ENCODE measurements at regions of chr17 and their contacts with region 1.

Region 1: GRCh38 chr17:64420143-64420971 is 28.6 kb upstream of the MILR1 start:
- DNase-seq: peak; percentile 81
- ATAC-seq: peak; percentile 86
- H3K4me3 ChIP-seq: no peak overlapping the region
- H3K27ac ChIP-seq: no peak overlapping the region
- H3K4me1 ChIP-seq: peaks cover 3 to 18% of the 10 kb centered on the region in 2 experiments; a peak in 2 of 4 replicates
- H3K27me3 ChIP-seq: no peaks in the 10 kb centered on the region
- CTCF ChIP-seq: peak; percentile 85 to 95 (median 92)
- POLR2A ChIP-seq: no peak
- RAD21 ChIP-seq: peak; percentile 99

Region 2: GRCh38 chr17:63919311-63919723 is 501.0 kb before region 1 on chr17:
- CTCF ChIA-PET with region 1: interaction called, 10 read pairs
- POLR2A ChIA-PET with region 1: no interaction called
- RAD21 ChIA-PET with region 1: no interaction called
- intact Hi-C with region 1: no loop called
- DNase-seq: peak; percentile 59
- ATAC-seq: peak; percentile 98
- H3K4me3 ChIP-seq: no peak overlapping the region
- H3K27ac ChIP-seq: no peak overlapping the region
- H3K4me1 ChIP-seq: no peaks in the 10 kb centered on the region
- H3K27me3 ChIP-seq: no peaks in the 10 kb centered on the region
- CTCF ChIP-seq: peak; percentile 96 to 98 (median 98)
- POLR2A ChIP-seq: no peak
- RAD21 ChIP-seq: peak; percentile 97

Region 3: GRCh38 chr17:64063766-64064224 is 356.6 kb before region 1 on chr17:
- CTCF ChIA-PET with region 1: no interaction called
- POLR2A ChIA-PET with region 1: no interaction called
- RAD21 ChIA-PET with region 1: no interaction called
- intact Hi-C with region 1: no loop called
- DNase-seq: no peak
- ATAC-seq: peak; percentile 97
- H3K4me3 ChIP-seq: no peak overlapping the region
- H3K27ac ChIP-seq: no peak overlapping the region
- H3K4me1 ChIP-seq: no peaks in the 10 kb centered on the region
- H3K27me3 ChIP-seq: no peaks in the 10 kb centered on the region
- CTCF ChIP-seq: peak; percentile 45 to 81 (median 72)
- POLR2A ChIP-seq: no peak
- RAD21 ChIP-seq: peak; percentile 91

Region 4: GRCh38 chr17:64281962-64282727 is 138.2 kb before region 1 on chr17:
- CTCF ChIA-PET with region 1: interaction called, 19 read pairs
- POLR2A ChIA-PET with region 1: no interaction called
- RAD21 ChIA-PET with region 1: no interaction called
- intact Hi-C with region 1: no loop called
- DNase-seq: peak; percentile 86
- ATAC-seq: peak; percentile 89
- H3K4me3 ChIP-seq: no peak overlapping the region
- H3K27ac ChIP-seq: no peak overlapping the region
- H3K4me1 ChIP-seq: peaks cover 0 to 10% of the 10 kb centered on the region in 2 experiments; a peak in 2 of 4 replicates
- H3K27me3 ChIP-seq: no peaks in the 10 kb centered on the region
- CTCF ChIP-seq: peak; percentile 87 to 94 (median 91)
- POLR2A ChIP-seq: no peak
- RAD21 ChIP-seq: peak; percentile 94

Region 5: DNA sequence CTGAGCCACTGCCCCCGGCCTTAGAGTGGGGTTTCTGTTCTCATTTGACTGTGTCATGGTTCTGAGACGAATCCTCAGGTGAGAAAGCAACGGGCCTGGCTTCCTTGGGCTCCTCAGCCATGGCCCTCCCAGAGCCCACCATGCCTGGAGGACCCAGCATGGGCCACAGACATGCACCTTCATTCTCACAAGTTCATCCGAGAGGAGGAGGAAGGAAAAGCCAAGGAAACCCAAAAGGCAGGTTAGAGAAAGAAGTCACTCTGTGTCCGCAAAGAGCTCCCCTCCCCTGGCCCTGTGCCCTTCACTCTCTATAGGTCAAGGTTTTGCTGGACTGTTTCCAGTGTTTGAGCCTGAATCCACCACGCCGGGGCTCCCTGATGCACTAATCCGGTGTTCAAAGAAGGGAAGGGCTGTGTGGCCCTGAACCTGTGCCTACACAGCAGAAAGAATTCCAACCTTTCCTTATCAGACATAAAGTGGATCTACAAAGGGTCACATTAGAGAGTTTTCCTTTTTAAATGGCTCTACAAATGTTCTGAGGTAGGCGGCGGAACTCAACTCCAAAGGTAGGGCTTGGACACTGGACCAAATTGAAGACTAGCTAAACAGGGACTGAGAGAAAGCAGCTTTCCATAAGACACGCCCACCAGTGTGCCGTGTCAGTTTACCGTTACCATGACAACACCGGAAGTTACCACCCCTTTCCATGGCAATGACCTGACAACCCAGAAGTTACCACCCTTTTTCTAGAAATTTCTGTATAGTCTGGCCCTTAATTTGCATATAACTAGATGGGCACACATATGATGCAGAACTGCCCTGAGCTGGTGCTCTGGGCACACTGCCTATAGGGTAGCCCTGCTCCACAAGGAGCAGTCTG is 13.8 kb before region 1 on chr17:
- CTCF ChIA-PET with region 1: interaction called, 33 read pairs
- POLR2A ChIA-PET with region 1: no interaction called
- RAD21 ChIA-PET with region 1: interaction called in 1 of 2 experiments, 3 read pairs
- intact Hi-C with region 1: no loop called
- DNase-seq: no peak
- ATAC-seq: peak; percentile 67
- H3K4me3 ChIP-seq: no peak overlapping the region
- H3K27ac ChIP-seq: no peak overlapping the region
- H3K4me1 ChIP-seq: peaks cover 4 to 10% of the 10 kb centered on the region in 2 experiments; a peak in 3 of 4 replicates
- H3K27me3 ChIP-seq: no peaks in the 10 kb centered on the region
- CTCF ChIP-seq: no peak
- POLR2A ChIP-seq: no peak
- RAD21 ChIP-seq: no peak

Region 6: DNA sequence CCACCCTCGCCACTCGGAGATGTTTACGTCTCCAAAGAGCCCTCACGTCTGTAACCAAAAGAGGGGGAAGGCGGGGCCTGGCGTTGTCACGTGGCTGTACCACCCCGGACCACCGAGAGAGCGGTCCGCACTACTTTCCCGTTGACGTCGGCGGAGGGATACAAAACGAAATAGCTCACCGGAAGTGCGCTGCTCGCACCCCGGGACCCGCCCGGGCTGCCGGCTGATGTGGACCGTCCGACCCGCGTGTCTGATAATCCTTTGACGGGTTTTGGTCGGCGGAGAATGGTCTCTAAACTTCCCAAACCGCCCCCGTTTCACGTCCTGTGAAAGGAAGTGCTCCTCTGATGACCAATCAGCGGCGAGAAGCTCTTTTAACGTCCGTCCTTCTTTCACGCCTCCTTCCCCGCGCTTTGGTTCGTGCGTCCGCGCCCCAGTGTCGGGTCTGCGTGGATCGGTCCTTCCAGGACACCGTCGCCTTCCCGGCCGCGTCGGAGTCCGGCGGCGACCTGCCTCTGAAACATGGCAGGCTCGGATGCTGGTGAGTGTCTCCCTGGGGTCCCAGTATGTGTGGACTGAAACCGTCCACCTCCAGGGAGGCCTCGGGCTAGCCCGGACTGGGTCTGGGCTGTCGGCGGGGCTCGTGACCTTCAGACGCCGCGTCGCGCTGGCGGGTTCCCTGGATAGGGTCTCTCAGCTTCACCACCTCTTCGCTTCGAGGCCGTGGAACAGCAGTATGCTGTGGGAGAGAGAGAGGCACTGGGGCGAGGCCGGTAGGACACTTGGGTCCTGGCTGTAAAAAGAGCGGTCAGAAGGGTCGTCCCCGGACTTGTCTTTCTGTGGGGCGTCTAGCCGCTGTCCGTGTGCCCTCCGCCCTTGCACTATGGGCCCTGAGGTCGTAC is 86.5 kb after region 1 on chr17 and contains the start of gene CEP95:
- CTCF ChIA-PET with region 1: interaction called, 7 read pairs
- POLR2A ChIA-PET with region 1: interaction called, 34 read pairs
- RAD21 ChIA-PET with region 1: interaction called in 1 of 2 experiments, 3 read pairs
- intact Hi-C with region 1: no loop called
- DNase-seq: peak; percentile 98
- ATAC-seq: peak; percentile 66
- H3K4me3 ChIP-seq: peak within 1 kb of the TSS; percentile 93 to 95
- H3K27ac ChIP-seq: peak within 1 kb of the TSS; percentile 90
- H3K4me1 ChIP-seq: peaks cover 12 to 28% of the 10 kb centered on the region in 2 experiments
- H3K27me3 ChIP-seq: no peaks in the 10 kb centered on the region
- CTCF ChIP-seq: no peak
- POLR2A ChIP-seq: peak; percentile 43
- RAD21 ChIP-seq: no peak
- total RNA-seq, gene CEP95: 77.0 TPM

Region 7: DNA sequence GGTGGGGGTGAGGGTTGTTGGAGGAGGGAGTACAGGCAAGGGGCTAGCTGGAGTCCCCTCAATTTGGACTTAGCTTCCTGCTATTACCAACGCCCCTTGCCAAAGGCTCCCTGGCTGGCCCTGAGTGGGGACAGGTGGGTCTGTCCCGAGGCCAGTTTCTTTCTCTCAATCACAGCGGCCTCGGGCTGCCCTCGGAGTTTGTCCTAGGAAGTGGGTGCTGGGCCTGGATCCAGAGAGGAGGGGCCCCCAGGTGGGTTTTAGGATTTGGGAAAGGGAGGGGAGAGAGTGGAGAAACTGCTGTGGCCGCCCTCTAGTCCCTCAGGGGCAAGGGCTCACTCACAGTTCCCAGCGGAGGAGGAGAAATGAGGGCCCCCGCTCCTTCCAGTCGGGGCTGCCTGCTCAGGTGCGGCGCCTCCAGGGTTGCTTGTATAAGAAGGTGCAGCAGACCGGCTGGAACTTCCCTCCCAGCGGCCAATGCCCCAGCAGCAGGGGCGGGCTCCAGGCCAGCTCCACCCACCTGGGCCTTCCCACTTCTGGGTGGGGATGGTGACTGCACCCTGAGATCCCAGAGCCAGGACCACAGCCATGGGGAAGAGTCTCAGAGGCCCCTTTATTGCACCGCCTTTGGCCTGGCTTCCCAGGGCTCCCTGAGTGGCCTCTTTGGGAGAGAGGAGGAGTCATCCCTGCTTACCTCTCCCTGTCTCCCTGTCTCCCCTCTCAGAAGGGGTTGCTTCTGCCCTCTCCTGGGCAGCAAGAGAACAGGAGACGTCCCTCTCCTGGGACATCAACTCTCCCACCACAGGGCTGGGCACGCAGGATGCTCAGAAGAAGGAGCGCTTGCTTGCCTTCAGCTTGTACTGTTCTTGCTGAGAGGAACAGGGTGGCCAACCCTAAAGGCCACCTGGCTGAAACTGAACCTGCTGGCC is 353.7 kb after region 1 on chr17:
- CTCF ChIA-PET with region 1: interaction called, 40 read pairs
- POLR2A ChIA-PET with region 1: interaction called, 5 read pairs
- RAD21 ChIA-PET with region 1: interaction called, 3 to 4 read pairs
- intact Hi-C with region 1: loop called (anchors 1 kb)
- DNase-seq: peak; percentile 95
- ATAC-seq: peak; percentile 89
- H3K4me3 ChIP-seq: peak overlapping the region; percentile 80 to 89
- H3K27ac ChIP-seq: peak overlapping the region; percentile 73
- H3K4me1 ChIP-seq: peaks cover 17 to 42% of the 10 kb centered on the region in 2 experiments
- H3K27me3 ChIP-seq: no peaks in the 10 kb centered on the region
- CTCF ChIP-seq: peak; percentile 80 to 95 (median 89); a peak in 5 of 6 replicates
- POLR2A ChIP-seq: peak; percentile 81
- RAD21 ChIP-seq: peak; percentile 89

Measured in HCT116 (cell line).